ENCODE measurements at regions of chr2 and their contacts with region 1.

Region 1: DNA sequence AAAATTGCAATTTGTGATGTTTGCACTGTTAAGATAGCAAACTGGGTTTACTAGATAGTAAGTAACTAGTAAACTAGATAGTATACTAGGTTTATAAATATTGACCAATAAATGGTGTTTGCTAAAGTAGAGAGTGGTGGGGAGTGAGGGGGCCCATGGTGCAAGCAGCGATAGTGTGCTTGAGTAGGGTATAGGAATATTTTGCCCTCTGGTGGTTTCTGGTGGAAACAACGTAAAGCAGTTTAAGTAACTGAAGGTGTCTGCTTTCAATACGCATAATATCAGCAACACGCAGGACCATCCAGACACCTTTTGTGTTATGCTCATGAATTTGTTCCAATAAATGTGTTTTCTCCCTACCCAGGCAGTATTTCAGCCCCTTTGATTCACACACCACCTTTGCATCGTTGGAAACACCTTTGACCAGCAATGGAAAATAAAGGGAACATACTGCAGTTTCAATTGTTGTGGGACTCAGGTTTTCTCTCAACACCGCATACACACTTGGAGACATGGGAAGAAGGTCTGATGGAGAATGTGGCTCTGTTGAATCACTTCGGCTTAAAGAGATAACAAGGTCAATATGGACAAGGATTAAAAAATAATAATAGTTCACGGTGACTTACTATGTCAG is 16.7 kb upstream of the STAT1 start:
- DNase-seq: no peak
- H3K4me3 ChIP-seq: no peak overlapping the region
- H3K27ac ChIP-seq: no peak overlapping the region
- H3K4me1 ChIP-seq: peaks cover 3% of the 10 kb centered on the region
- H3K27me3 ChIP-seq: no peaks in the 10 kb centered on the region
- CTCF ChIP-seq: peak; percentile 58 to 73

Region 2: GRCh38 chr2:190781604-190782198 is 248.9 kb before region 1 on chr2:
- CTCF ChIA-PET with region 1: no interaction called
- dilution Hi-C with region 1: no loop called
- in situ Hi-C with region 1: loop called in 1 of 2 experiments (anchors 10 kb)
- intact Hi-C with region 1: loop called (anchors 1 kb)
- DNase-seq: peak; percentile 43
- H3K4me3 ChIP-seq: no peak overlapping the region
- H3K27ac ChIP-seq: no peak overlapping the region
- H3K4me1 ChIP-seq: peaks cover 5% of the 10 kb centered on the region
- H3K27me3 ChIP-seq: no peaks in the 10 kb centered on the region
- CTCF ChIP-seq: peak; percentile 19 to 63

Region 3: DNA sequence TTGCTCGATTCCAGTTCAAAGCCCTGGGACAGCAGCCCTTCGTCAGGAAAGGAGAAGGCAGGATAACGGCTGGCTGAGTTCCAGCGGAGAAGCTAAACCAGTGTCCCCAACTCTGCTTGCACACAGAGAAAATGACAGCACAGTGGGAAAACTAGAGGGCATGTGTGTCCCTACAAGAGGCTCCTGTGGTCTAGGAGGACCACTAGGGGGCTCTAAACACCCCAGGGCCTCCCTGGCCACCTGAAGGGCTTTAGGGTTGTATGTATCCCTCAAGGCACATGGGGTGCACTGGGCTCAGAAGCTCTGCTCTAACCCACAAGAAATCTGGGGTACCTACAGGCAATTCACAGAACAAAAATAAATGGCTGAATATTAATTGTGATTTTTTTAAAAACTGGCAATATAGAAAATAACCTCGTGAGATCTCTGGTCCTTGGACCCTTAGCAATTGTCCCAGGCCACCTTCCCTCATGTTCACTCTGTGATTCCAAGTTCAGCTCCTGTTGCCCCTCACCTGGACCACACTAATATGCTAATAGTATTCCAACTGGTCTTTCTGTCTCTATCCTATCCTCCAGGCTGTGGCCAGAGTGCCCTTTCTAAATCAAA is 34.2 kb before region 1 on chr2:
- CTCF ChIA-PET with region 1: no interaction called
- dilution Hi-C with region 1: no loop called
- in situ Hi-C with region 1: no loop called
- intact Hi-C with region 1: loop called (anchors 1 kb)
- DNase-seq: no peak
- H3K4me3 ChIP-seq: no peak overlapping the region
- H3K27ac ChIP-seq: no peak overlapping the region
- H3K4me1 ChIP-seq: peaks cover 12% of the 10 kb centered on the region
- H3K27me3 ChIP-seq: no peaks in the 10 kb centered on the region
- CTCF ChIP-seq: peak; percentile 59 to 61

Region 4: GRCh38 chr2:191128172-191128910 is 97.7 kb after region 1 on chr2:
- CTCF ChIA-PET with region 1: no interaction called
- dilution Hi-C with region 1: loop called (anchors 25 kb)
- in situ Hi-C with region 1: no loop called
- intact Hi-C with region 1: no loop called
- DNase-seq: no peak
- H3K4me3 ChIP-seq: no peak overlapping the region
- H3K27ac ChIP-seq: no peak overlapping the region
- H3K4me1 ChIP-seq: no peaks in the 10 kb centered on the region
- H3K27me3 ChIP-seq: no peaks in the 10 kb centered on the region
- CTCF ChIP-seq: no peak

Region 5: DNA sequence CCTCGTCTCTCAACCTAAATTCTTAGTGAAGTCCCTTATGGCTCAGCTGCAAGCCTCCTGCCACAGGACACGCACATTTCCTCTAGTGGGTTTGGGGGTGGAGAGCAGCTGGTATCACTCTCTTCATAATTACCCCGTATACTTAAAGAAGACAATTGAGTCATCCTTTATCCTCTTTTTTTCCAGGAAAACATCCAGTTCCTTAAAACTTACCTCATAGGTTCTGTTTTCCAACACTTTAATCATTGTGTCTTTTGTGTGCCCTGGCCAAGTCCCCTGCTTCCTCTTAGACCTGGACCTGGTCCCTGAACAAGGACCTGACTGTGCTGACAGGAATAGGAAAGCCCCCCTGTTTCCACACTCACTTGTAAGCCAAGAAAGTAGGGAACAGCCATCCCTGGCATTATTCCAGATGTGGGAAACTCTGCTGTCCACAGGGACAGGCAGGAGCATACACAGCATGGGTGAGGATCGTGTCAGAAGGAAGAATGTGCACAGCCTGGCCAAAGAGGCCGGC is 172.3 kb after region 1 on chr2:
- CTCF ChIA-PET with region 1: no interaction called
- dilution Hi-C with region 1: no loop called
- in situ Hi-C with region 1: no loop called
- intact Hi-C with region 1: no loop called
- DNase-seq: peak; percentile 71
- H3K4me3 ChIP-seq: no peak overlapping the region
- H3K27ac ChIP-seq: peak overlapping the region; percentile 100
- H3K4me1 ChIP-seq: peaks cover 18% of the 10 kb centered on the region
- H3K27me3 ChIP-seq: no peaks in the 10 kb centered on the region
- CTCF ChIP-seq: no peak

Region 6: DNA sequence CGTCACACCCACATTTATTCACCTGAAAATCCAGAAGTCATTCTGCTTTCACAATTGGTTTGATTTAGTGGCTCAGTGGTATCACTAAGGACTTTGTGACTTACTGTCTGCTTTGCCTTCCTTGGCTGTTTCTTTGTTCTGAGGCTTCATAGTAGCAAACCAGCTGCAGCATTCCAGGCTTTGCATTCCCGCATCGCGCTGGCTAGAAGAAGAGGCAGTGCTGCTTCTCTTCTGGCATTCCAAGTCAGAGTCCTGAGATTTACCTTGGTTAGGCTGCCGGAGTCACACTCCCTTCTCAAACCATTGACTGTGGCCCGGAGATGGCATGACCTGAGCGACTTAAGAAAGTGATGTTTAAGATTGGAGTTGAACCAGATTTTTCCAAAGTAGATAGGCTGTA is 249.7 kb after region 1 on chr2:
- CTCF ChIA-PET with region 1: no interaction called
- dilution Hi-C with region 1: no loop called
- in situ Hi-C with region 1: no loop called
- intact Hi-C with region 1: no loop called
- DNase-seq: no peak
- H3K4me3 ChIP-seq: no peak overlapping the region
- H3K27ac ChIP-seq: no peak overlapping the region
- H3K4me1 ChIP-seq: no peaks in the 10 kb centered on the region
- H3K27me3 ChIP-seq: no peaks in the 10 kb centered on the region
- CTCF ChIP-seq: no peak

Measured in mammary epithelial cell (primary cell).